Dorsolateral prefrontal cortex (tissue), 120 donors: ENCODE measurements at regions of chr9 and their contacts with region 1.

Region 1: DNA sequence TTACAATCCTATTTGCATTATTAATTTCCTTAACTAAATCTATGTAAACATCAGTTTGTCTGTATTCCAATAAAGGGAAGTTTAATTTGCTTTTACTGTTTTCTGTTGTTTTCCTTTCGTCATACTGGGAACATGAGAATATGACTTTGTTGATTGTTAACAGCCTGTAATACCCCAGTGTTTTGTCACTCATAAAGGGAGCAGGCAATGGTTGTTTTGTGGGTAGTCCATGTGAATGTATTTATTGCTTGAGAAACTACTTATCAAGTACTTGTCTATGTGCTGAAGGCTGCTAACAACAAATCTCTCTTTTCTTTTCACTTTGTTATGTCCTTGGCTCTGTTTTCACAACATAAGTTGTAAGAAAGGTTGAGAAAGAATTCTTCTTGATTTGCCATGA is 1070.2 kb upstream of the ACO1 start:
- DNase-seq: no peak
- H3K4me3 ChIP-seq: no peak overlapping the region
- H3K27ac ChIP-seq: no peak overlapping the region
- H3K27me3 ChIP-seq: no peaks in the 10 kb centered on the region
- CTCF ChIP-seq: no peak

Region 2: GRCh38 chr9:31347082-31347617 is 32.9 kb after region 1 on chr9:
- intact Hi-C with region 1: loop called in 1 of 2 experiments (anchors 2 kb)
- DNase-seq: no peak
- H3K4me3 ChIP-seq: peak overlapping the region in 25 of 59 donors; percentile 1 to 44 (median 13)
- H3K27ac ChIP-seq: peak overlapping the region in 23 of 59 donors; percentile 4 to 58 (median 25)
- H3K27me3 ChIP-seq: no peaks in the 10 kb centered on the region
- CTCF ChIP-seq: no peak